CD4-positive, alpha-beta memory T cell (primary cell): ENCODE measurements at regions of chr11 and their contacts with region 1.

Region 1: GRCh38 chr11:45247433-45247832 is 38.7 kb downstream of the SYT13 start:
- DNase-seq: no peak
- H3K4me3 ChIP-seq: no peak overlapping the region
- H3K4me3 Mint-ChIP-seq: no peak overlapping the region
- H3K27ac ChIP-seq: no peak overlapping the region
- H3K27ac Mint-ChIP-seq: no peak overlapping the region
- H3K4me1 ChIP-seq: no peaks in the 10 kb centered on the region
- H3K4me1 Mint-ChIP-seq: peaks cover 0 to 3% (median 0%) of the 10 kb centered on the region in 4 donors
- H3K27me3 ChIP-seq: no peaks in the 10 kb centered on the region
- H3K27me3 Mint-ChIP-seq: peaks cover 9 to 19% of the 10 kb centered on the region in 2 donors

Region 2: DNA sequence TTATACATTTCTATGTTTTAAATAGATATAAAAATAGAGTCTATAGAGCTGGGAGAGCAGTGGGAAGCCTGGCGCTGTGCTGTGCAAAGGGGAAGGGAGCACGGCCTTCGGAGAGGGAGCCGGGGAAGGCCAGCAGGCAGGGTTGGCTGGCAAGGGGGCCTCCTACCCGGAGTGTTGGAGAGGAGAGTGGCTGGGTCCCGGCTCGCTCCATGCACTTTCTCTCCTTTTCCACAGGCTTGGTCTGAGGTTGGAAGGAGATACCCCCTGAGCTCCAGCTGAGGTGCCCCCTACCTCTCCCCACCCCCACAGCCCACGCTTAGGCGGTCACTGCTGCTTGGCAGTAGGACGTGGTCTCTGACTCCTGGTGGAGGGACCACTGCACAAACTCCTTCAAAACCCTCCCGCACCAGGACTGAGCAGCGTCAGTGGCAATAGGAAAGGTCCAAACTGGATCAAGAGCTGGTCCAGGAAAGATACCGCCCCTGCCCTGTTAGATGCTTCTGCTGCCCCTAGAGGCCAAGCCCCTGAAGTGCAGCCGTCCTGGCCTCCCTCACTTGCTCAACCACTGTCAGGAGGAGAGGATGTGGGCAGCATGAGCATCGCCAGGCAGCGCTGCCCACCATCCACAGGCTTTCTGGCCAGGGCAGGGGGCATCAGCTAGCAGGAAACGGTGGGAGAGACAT is 14.2 kb before region 1 on chr11:
- CTCF ChIA-PET with region 1: interaction called, 15 read pairs
- POLR2A ChIA-PET with region 1: no interaction called
- intact Hi-C with region 1: no loop called
- DNase-seq: peak in 4 of 5 donors; percentile 33 to 52 (median 42)
- H3K4me3 ChIP-seq: no peak overlapping the region
- H3K4me3 Mint-ChIP-seq: no peak overlapping the region
- H3K27ac ChIP-seq: no peak overlapping the region
- H3K27ac Mint-ChIP-seq: no peak overlapping the region
- H3K4me1 ChIP-seq: no peaks in the 10 kb centered on the region
- H3K4me1 Mint-ChIP-seq: peaks cover 0 to 1% (median 0%) of the 10 kb centered on the region in 4 donors
- H3K27me3 ChIP-seq: peaks cover 9% of the 10 kb centered on the region
- H3K27me3 Mint-ChIP-seq: peaks cover 16 to 18% of the 10 kb centered on the region in 2 donors